ENCODE measurements at regions of chr14 and their contacts with region 1.

Region 1: DNA sequence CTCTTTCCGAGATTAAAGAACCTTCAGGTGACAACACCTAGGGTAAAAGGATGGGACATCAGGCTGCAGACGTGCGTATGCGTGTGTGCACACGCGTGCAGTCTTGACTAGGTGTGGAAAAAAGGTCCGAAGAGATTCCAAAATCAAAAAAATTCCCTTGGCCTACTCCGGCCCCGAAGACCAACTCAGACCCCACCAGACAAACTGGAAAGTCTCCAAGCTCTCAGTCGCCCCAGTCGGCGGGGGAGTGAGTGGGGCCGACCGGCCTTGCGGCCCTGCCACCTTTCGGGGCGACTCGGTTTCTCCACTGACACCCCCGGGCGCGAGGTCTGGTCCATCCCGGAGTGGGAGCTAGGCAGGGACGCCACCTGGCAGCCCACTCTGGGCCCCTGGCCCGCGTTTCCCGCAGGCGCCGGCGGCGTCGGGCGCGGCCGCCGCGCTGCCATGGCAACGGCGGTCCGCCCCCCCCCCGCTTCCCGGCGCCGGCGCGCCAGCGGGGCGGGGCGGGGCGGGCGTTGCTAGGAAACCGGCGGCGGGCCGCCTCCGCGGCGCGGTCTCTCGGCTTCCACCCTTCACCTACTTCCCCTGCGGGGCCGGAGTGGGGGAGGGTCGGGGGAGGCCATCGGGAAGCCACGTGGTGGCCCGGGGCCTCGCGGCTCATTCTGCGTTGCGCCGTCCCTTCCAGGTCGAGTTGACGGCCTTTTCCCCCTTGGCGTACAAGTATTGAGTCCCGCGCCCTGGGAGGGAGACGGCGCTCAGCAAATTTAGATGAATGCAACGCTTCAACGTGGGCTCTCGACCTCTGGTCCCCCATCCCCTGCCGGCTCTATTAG is 253.1 kb downstream of the EFCAB11 start:
- DNase-seq: peak; percentile 51 to 84 (median 70)
- H3K4me3 ChIP-seq: peak overlapping the region; percentile 51 to 86 (median 74)
- H3K27ac ChIP-seq: peak overlapping the region in 39 of 59 donors; percentile 1 to 76 (median 49)
- H3K27me3 ChIP-seq: no peaks in the 10 kb centered on the region
- CTCF ChIP-seq: peak in 1 of 56 donors; percentile 1

Region 2: GRCh38 chr14:89270439-89271227 is 430.8 kb before region 1 on chr14:
- intact Hi-C with region 1: no loop called
- DNase-seq: no peak
- H3K4me3 ChIP-seq: no peak overlapping the region
- H3K27ac ChIP-seq: no peak overlapping the region
- H3K27me3 ChIP-seq: no peaks in the 10 kb centered on the region
- CTCF ChIP-seq: no peak

Region 3: GRCh38 chr14:89613260-89614008 is 88.0 kb before region 1 on chr14:
- intact Hi-C with region 1: no loop called
- DNase-seq: no peak
- H3K4me3 ChIP-seq: no peak overlapping the region
- H3K27ac ChIP-seq: peak overlapping the region in 1 of 59 donors; percentile 21
- H3K27me3 ChIP-seq: no peaks in the 10 kb centered on the region
- CTCF ChIP-seq: no peak

Region 4: GRCh38 chr14:89625244-89625713 is 76.1 kb before region 1 on chr14:
- intact Hi-C with region 1: loop called (anchors 5 to 10 kb)
- DNase-seq: peak in 5 of 10 donors; percentile 14 to 55 (median 39)
- H3K4me3 ChIP-seq: peak overlapping the region in 50 of 59 donors; percentile 0 to 58 (median 34)
- H3K27ac ChIP-seq: peak overlapping the region in 7 of 59 donors; percentile 2 to 41 (median 39)
- H3K27me3 ChIP-seq: no peaks in the 10 kb centered on the region
- CTCF ChIP-seq: no peak

Region 5: DNA sequence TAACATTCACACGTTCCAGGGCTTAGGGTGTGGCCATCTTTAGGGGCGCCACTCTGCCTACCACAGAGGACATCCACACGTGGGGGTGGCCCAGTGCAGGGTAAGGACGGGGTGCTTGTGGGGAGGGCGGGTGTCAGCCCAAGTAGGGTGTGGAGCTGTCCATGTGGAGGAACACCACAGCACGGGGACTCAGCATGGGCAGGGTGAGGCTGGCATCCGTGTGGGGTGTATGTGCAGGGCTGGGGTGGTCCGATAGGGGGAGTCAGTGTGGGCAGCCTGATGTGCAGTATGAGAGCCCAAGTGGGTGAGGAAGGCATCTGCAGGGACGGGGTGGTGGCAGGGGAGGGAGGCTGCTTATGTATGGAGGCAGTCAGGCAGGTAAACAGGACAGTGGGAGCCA is 572.6 kb after region 1 on chr14:
- intact Hi-C with region 1: no loop called
- DNase-seq: no peak
- H3K4me3 ChIP-seq: no peak overlapping the region
- H3K27ac ChIP-seq: peak overlapping the region in 17 of 59 donors; percentile 3 to 66 (median 32)
- H3K27me3 ChIP-seq: no peaks in the 10 kb centered on the region
- CTCF ChIP-seq: no peak

Measured in dorsolateral prefrontal cortex (tissue), 120 donors.